Activated CD4-positive, alpha-beta T cell treated with anti-CD3 and anti-CD28 coated beads for 36 hours (primary cell): ENCODE measurements at regions of chr11 and their contacts with region 1.

Region 1: DNA sequence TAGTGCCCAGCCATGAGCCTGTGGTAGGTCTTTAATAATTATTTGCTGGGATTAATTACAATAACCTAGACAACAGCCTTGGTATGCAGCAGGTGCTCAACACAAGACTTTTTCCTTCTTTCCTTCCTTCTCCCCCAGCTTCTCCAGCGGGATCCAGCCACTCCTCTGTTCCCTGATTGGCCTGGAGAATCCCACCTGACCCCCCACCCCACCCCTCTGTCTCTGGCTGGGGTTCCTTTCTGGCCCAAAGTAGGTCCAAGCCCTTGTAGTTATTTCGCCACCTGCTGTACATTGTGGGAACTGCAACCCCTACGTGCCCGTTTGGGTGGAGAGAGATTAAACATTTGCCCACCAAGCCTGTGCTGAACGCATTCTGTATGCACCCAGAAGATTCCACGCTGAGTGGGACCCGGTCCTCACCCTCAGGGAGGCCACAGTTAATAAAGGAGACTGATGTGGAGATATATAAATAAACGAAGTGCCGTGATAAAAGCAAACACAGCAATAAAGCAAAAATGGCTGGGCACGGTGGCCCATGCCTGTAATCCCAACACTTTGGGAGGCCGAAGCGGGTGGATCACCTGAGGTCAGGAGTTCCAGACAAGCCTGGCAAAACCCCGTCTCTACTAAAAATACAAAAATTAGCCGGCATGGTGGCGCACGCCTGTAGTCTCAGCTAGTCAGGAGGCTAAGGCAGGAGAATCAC is 32.1 kb upstream of the DGKZ start:
- DNase-seq: peak; percentile 86
- ATAC-seq: peak; percentile 81
- H3K4me3 Mint-ChIP-seq: no peak overlapping the region
- H3K27ac Mint-ChIP-seq: no peak overlapping the region
- H3K4me1 Mint-ChIP-seq: peaks cover 16% of the 10 kb centered on the region
- H3K27me3 Mint-ChIP-seq: no peaks in the 10 kb centered on the region

Region 2: GRCh38 chr11:45872513-45873356 is 442.5 kb before region 1 on chr11:
- CTCF ChIA-PET with region 1: no interaction called
- POLR2A ChIA-PET with region 1: no interaction called
- intact Hi-C with region 1: loop called in 1 of 2 experiments (anchors 10 kb)
- DNase-seq: peak; percentile 65
- ATAC-seq: peak; percentile 89
- H3K4me3 Mint-ChIP-seq: no peak overlapping the region
- H3K27ac Mint-ChIP-seq: no peak overlapping the region
- H3K4me1 Mint-ChIP-seq: no peaks in the 10 kb centered on the region
- H3K27me3 Mint-ChIP-seq: no peaks in the 10 kb centered on the region

Region 3: DNA sequence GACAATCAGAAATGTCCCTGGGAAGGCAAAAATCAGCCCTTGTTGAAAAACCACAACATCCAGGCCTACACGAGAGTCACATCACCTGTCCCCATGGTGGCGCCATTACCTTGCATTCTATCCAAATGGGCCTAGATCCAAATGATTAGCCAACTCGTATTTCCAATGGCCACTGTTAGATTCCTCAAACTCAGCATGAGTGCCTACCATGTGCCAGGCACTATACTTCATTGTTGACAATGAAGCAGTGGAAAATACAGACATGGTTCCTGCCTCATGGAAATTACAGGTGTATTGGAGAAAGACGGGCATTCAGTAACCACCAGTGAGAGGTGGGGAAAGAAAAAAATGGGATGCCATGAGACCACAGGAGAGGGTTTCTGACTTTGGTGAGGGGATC is 67.5 kb before region 1 on chr11:
- CTCF ChIA-PET with region 1: interaction called, 230 read pairs
- POLR2A ChIA-PET with region 1: interaction called, 4 read pairs
- intact Hi-C with region 1: loop called (anchors 1 kb)
- DNase-seq: peak; percentile 65
- ATAC-seq: no peak
- H3K4me3 Mint-ChIP-seq: no peak overlapping the region
- H3K27ac Mint-ChIP-seq: no peak overlapping the region
- H3K4me1 Mint-ChIP-seq: peaks cover 11% of the 10 kb centered on the region
- H3K27me3 Mint-ChIP-seq: no peaks in the 10 kb centered on the region

Region 4: GRCh38 chr11:46332568-46333393 is 17.6 kb after region 1 on chr11:
- CTCF ChIA-PET with region 1: interaction called, 25 read pairs
- POLR2A ChIA-PET with region 1: interaction called, 3 read pairs
- intact Hi-C with region 1: no loop called
- DNase-seq: peak; percentile 75
- ATAC-seq: peak; percentile 18
- H3K4me3 Mint-ChIP-seq: peak overlapping the region; percentile 71
- H3K27ac Mint-ChIP-seq: peak overlapping the region; percentile 3
- H3K4me1 Mint-ChIP-seq: peaks cover 72% of the 10 kb centered on the region
- H3K27me3 Mint-ChIP-seq: no peaks in the 10 kb centered on the region

Region 5: DNA sequence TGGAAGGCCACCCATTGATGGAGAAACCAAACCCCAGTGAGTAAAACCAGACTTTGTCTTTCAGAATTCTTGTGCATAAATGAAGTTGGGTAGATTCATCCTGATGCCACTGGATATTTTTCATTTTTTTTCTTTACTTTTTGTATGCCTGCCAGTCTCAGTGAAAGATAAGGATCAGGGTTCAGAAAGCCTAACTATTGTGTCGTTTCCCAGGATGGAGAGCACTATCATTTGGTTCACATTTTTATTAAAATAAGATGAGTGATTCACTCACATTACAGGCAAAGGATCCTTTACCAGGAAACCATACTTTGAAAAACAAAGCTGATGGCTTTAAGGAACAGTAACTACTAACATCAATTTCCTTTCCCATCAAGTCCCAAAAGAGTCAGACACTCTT is 809.5 kb after region 1 on chr11:
- CTCF ChIA-PET with region 1: no interaction called
- POLR2A ChIA-PET with region 1: no interaction called
- intact Hi-C with region 1: no loop called
- DNase-seq: no peak
- ATAC-seq: no peak
- H3K4me3 Mint-ChIP-seq: no peak overlapping the region
- H3K27ac Mint-ChIP-seq: no peak overlapping the region
- H3K4me1 Mint-ChIP-seq: no peaks in the 10 kb centered on the region
- H3K27me3 Mint-ChIP-seq: no peaks in the 10 kb centered on the region